Vagina (tissue), 2 donors: ENCODE measurements at regions of chr18 and their contacts with region 1.

Region 1: DNA sequence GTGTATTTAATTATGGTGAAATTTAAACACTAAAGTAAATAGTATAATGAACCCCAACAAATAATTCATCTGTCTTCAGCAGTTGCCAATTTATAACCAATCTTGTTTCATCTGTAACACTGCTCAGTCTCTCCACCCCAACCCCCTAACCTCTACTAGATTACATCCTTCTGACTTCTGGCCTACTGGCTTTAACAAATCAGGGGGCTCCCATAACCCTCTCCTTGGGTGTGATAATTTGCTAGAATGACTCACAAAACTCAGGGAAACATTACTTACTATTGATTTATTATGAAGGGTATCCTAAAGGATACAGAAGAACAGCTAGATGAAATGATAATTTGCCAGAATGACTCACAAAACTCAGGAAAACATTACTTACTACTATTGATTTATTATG is 50.7 kb downstream of the PIK3C3 start:
- DNase-seq: no peak
- H3K4me3 ChIP-seq: no peak overlapping the region
- H3K27ac ChIP-seq: no peak overlapping the region
- H3K4me1 ChIP-seq: no peaks in the 10 kb centered on the region
- H3K27me3 ChIP-seq: no peaks in the 10 kb centered on the region
- CTCF ChIP-seq: no peak
- POLR2A ChIP-seq: no peak

Region 2: GRCh38 chr18:41982942-41983660 is 22.7 kb before region 1 on chr18:
- intact Hi-C with region 1: loop called (anchors 2 kb)
- DNase-seq: no peak
- H3K4me3 ChIP-seq: no peak overlapping the region
- H3K27ac ChIP-seq: no peak overlapping the region
- H3K4me1 ChIP-seq: no peaks in the 10 kb centered on the region
- H3K27me3 ChIP-seq: no peaks in the 10 kb centered on the region
- CTCF ChIP-seq: no peak
- POLR2A ChIP-seq: no peak